ENCODE measurements at regions of chr16 and their contacts with region 1.

Region 1: GRCh38 chr16:67598527-67598926 is 36.2 kb downstream of the CTCF start:
- DNase-seq: no peak
- H3K4me3 ChIP-seq: no peak overlapping the region
- H3K27ac ChIP-seq: peak overlapping the region; percentile 37
- H3K4me1 ChIP-seq: peaks cover 5% of the 10 kb centered on the region
- H3K27me3 ChIP-seq: no peaks in the 10 kb centered on the region
- CTCF ChIP-seq: no peak

Region 2: GRCh38 chr16:67534431-67534830 is 64.1 kb before region 1 on chr16:
- CTCF ChIA-PET with region 1: interaction called, 13 read pairs
- POLR2A ChIA-PET with region 1: interaction called, 8 read pairs
- intact Hi-C with region 1: no loop called
- DNase-seq: no peak
- H3K4me3 ChIP-seq: no peak overlapping the region
- H3K27ac ChIP-seq: no peak overlapping the region
- H3K4me1 ChIP-seq: peaks cover 22% of the 10 kb centered on the region
- H3K27me3 ChIP-seq: peaks cover 12% of the 10 kb centered on the region
- CTCF ChIP-seq: no peak

Region 3: DNA sequence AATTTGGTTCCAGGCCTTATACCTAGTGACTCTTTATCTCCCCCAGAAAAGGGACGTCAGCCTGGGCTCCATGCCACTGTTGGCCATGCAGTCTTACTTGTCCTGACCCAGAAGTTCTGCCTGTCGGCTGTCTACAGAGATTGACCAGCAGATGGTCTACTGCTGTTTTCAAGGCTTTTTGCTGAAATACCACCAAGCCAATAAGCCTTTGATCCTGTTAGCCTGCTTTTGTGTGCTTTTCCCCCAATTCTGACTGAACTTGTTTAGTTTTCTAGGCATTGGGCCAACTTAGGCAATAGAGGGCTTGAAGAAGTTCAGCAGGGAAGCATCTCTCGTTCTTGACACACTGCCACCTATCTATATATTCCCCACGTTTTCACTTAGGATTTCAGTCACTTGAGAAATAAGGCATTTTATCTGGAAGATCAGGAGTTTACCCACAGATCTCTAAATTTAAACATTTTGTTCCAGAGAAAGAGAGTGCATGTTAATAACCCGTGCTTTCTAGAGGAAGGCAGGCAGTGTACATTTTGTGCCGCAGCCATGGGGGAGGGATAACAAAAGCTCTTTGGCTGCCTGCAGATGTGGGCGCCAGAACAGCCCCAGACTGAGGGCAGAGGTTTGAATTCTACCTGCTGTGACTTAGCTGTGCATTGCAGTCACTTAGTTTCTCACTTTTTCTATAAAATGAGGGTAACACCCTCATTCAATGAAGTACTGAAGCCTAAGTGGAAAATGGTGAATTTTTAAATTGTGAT is 34.1 kb after region 1 on chr16:
- CTCF ChIA-PET with region 1: no interaction called
- POLR2A ChIA-PET with region 1: no interaction called
- intact Hi-C with region 1: loop called (anchors 2 kb)
- DNase-seq: peak; percentile 94
- H3K4me3 ChIP-seq: no peak overlapping the region
- H3K27ac ChIP-seq: peak overlapping the region; percentile 65
- H3K4me1 ChIP-seq: peaks cover 18% of the 10 kb centered on the region
- H3K27me3 ChIP-seq: no peaks in the 10 kb centered on the region
- CTCF ChIP-seq: peak; percentile 45; the same call in 1 of the 2 replicates